ENCODE measurements at regions of chr2 and their contacts with region 1.

Region 1: GRCh38 chr2:101205521-101205998 is 47.1 kb upstream of the CNOT11 start:
- DNase-seq: peak in 4 of 5 donors; percentile 38 to 53 (median 44)
- ATAC-seq: peak; percentile 59 to 93 (median 90)
- H3K4me3 ChIP-seq: peak overlapping the region in 8 of 12 donors; percentile 14 to 40 (median 32)
- H3K27ac ChIP-seq: no peak overlapping the region
- H3K4me1 ChIP-seq: peaks cover 0 to 14% (median 0%) of the 10 kb centered on the region in 12 donors
- H3K27me3 ChIP-seq: no peaks in the 10 kb centered on the region
- CTCF ChIP-seq: peak; percentile 25 to 72 (median 52)
- POLR2A ChIP-seq: no peak

Region 2: DNA sequence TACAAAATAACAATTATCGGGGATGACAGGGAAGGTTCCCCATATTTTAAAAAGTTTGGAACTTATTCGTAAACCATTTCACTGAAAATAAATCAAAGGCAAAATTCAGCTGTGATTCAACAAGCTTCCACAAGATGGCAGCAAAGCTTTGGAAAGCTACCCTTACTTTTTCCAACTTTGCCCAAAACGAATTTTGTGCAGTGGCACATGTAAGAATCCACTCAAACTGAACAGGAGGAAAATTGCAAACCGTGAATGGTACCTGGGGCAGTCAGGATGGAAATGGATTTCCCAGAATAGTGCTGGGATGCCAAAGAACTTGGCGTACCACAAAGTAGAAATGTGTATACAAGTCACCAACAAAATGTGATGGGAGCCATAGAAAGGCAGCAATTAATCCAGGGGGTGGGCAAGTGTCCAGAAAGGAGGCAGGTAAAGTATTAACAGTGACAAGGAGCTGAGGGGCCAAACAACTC is 192.8 kb before region 1 on chr2:
- intact Hi-C with region 1: loop called in 9 of 10 experiments (anchors 1 to 10 kb)
- DNase-seq: no peak
- ATAC-seq: peak in 1 of 4 donors; percentile 40
- H3K4me3 ChIP-seq: no peak overlapping the region
- H3K27ac ChIP-seq: no peak overlapping the region
- H3K4me1 ChIP-seq: peaks cover 0 to 8% (median 0%) of the 10 kb centered on the region in 12 donors
- H3K27me3 ChIP-seq: no peaks in the 10 kb centered on the region
- CTCF ChIP-seq: peak; percentile 67 to 89 (median 82)
- POLR2A ChIP-seq: no peak

Region 3: DNA sequence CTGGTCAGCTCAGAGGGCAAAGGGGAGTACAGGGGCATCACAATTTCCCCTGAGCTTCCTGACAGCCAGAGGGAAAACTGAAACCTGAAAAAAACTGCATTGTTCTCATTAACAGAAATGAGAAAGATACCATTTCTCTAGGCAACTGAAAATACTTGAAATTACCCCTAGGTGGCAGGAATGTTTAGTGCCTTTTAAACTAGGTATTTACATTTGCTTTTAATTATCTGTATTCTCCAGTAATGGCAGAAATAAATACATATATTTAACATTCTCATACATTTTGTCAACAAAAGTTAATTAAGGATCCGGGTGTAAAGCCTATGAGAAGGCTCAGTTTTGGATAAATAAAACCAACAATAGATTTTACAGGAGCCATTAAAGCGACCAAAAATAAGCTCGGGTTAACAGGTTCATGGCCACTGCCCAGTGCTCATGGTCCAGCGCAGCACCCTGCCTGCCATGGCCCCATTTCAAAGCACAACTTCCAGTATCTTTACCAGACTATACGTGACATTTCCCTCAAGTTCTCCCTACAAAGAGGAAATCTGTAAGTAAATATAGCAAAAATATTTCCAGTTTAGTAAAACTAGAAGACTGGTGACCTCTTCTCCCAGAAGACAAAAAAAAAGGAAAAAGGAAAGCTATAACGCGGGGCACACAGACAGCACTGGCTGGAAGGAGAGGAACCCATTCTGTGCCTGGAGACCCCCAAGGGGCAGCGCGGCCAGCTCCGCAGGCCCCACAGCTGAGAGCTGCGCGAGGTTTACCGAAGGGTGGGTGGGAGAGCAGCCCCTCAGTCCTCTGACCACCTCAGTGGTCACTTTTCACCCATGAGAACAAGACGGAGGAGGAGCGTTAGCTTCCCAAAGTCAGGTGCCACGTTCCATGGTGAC is 168.8 kb before region 1 on chr2:
- intact Hi-C with region 1: loop called in 1 of 10 experiments (anchors 5 kb)
- DNase-seq: no peak
- ATAC-seq: no peak
- H3K4me3 ChIP-seq: no peak overlapping the region
- H3K27ac ChIP-seq: no peak overlapping the region
- H3K4me1 ChIP-seq: peaks cover 0 to 23% (median 0%) of the 10 kb centered on the region in 12 donors
- H3K27me3 ChIP-seq: no peaks in the 10 kb centered on the region
- CTCF ChIP-seq: peak; percentile 23 to 60 (median 46)
- POLR2A ChIP-seq: no peak

Region 4: GRCh38 chr2:101157272-101157671 is 48.3 kb before region 1 on chr2:
- intact Hi-C with region 1: loop called in 2 of 10 experiments (anchors 5 kb)
- DNase-seq: no peak
- ATAC-seq: no peak
- H3K4me3 ChIP-seq: no peak overlapping the region
- H3K27ac ChIP-seq: no peak overlapping the region
- H3K4me1 ChIP-seq: peaks cover 0 to 33% (median 21%) of the 10 kb centered on the region in 12 donors
- H3K27me3 ChIP-seq: no peaks in the 10 kb centered on the region
- CTCF ChIP-seq: no peak
- POLR2A ChIP-seq: no peak